Activated B cell treated with CpG ODN at 0.5 μM for 24 hours (primary cell): ENCODE measurements at regions of chr12 and their contacts with region 1.

Region 1: DNA sequence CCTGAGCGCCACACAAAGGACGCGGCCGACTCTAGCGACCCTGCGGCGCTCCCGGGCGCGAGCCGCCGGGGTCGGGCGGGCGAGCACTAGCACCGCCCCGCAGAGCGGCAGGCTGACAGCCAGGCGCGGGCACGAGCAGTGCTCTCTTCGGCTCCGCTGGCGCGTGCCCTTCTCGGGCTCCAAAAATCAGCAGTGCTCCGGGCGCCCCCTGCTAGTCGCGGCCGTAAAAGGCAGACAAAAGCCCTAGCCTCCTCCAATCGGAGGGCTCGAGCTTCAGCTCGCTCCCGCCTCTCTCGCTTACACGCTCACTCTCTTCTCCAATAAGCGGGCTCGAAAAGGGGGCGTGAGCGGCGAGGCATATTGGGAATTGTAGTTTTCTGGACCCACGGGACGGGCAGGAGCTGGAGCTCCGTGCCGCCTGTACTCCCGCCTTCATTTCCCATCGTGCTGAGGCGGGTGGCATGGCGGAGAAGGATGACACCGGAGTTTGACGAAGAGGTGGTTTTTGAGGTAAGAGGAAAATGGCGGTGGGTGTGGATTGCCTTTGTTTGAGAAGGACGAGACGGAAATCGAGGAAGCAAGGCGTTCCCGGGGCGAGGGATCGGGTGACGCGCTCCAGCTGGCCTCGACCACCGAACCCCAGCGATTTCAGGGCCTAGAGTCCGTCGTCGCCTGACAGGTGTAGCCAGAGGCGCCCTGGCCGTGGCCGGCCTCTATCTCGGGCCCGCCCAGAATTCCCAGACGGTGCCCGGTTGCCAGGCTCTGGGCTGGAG is at the starts of genes FGD6 and VEZT:
- DNase-seq: peak; percentile 92
- ATAC-seq: peak; percentile 92
- H3K4me3 Mint-ChIP-seq: peak within 1 kb of the TSS; percentile 96
- H3K27ac Mint-ChIP-seq: peak within 1 kb of the TSS; percentile 95
- H3K4me1 Mint-ChIP-seq: peaks cover 42% of the 10 kb centered on the region
- H3K27me3 Mint-ChIP-seq: no peaks in the 10 kb centered on the region
- CTCF ChIP-seq: no peak
- total RNA-seq, gene FGD6: 3.7 and 5.4 TPM in 2 replicates
- total RNA-seq, gene VEZT: 47.2 and 58.7 TPM in 2 replicates

Region 2: GRCh38 chr12:93441617-93442410 is 1775.7 kb before region 1 on chr12 and contains the start of gene UBE2N:
- CTCF ChIA-PET with region 1: no interaction called
- POLR2A ChIA-PET with region 1: no interaction called
- intact Hi-C with region 1: loop called (anchors 5 kb)
- DNase-seq: peak; percentile 99
- ATAC-seq: peak; percentile 84
- H3K4me3 Mint-ChIP-seq: peak within 1 kb of the TSS; percentile 96
- H3K27ac Mint-ChIP-seq: peak within 1 kb of the TSS; percentile 96
- H3K4me1 Mint-ChIP-seq: peaks cover 56% of the 10 kb centered on the region
- H3K27me3 Mint-ChIP-seq: no peaks in the 10 kb centered on the region
- CTCF ChIP-seq: no peak
- total RNA-seq, gene UBE2N: 152 and 163 TPM in 2 replicates

Region 3: DNA sequence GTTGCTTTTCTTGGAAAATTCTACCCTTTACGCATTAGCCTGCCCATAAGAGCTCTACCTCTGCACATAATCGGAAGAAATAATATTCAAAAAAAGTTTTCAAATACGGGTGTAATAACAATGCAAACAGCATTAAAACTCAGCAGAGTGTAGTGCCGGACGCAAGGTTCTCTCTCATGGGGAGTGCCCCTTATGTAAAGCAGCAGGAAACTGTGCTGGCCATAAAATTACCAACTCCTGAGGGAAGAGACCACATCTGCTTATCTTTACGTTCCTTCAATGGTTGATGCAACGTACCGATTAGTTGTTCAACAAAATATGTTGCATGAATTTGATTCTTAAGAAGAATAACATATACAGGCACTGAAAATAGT is 448.5 kb before region 1 on chr12:
- CTCF ChIA-PET with region 1: no interaction called
- POLR2A ChIA-PET with region 1: no interaction called
- intact Hi-C with region 1: loop called (anchors 5 kb)
- DNase-seq: peak; percentile 26
- ATAC-seq: peak; percentile 86
- H3K4me3 Mint-ChIP-seq: peak overlapping the region; percentile 86
- H3K27ac Mint-ChIP-seq: peak overlapping the region; percentile 98
- H3K4me1 Mint-ChIP-seq: peaks cover 68% of the 10 kb centered on the region
- H3K27me3 Mint-ChIP-seq: no peaks in the 10 kb centered on the region
- CTCF ChIP-seq: no peak

Region 4: DNA sequence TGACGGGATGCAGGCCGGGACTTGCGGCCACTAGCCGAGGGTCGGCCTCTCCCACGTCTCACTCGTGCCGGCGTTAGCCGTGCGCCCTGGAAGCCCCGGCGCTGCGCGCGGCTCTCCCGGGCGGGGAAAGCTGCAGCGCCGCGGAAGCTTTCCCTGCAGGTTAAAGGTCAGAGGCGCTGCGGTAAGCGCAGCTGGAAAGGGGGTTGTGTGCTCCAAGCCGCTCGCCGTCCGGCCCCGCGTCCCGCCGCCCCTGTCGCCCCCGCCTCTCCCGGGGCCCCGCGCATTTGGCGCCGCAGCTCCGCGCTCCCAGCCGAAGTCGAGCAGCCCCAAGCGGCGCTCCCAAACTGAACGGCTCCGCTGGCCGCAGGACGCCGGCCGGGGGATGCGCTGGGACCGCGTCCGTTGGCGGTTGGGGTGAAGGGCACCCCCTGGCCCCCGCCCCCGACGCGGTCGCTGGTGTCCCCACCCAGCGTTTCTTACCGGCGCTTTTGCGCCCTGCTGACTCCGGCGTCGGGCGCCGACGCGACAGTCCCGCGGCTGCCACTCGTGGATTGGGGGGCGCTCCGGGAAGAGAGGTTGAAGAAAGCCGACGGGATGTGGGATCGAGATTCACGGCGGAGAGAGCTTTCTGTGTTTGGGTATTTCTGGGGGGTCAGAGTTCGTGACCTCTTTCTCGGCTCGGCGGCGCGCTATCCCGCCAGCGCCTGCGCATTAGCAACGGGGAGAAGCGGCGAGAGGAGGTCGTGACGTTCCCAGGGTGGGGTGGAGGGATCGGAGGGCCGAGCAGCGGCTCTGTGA is 144.5 kb before region 1 on chr12 and contains the start of gene NR2C1:
- CTCF ChIA-PET with region 1: interaction called, 4 read pairs
- POLR2A ChIA-PET with region 1: interaction called, 9 read pairs
- intact Hi-C with region 1: loop called (anchors 1 kb)
- DNase-seq: peak; percentile 83
- ATAC-seq: peak; percentile 99
- H3K4me3 Mint-ChIP-seq: peak within 1 kb of the TSS; percentile 97
- H3K27ac Mint-ChIP-seq: peak within 1 kb of the TSS; percentile 94
- H3K4me1 Mint-ChIP-seq: peaks cover 13% of the 10 kb centered on the region
- H3K27me3 Mint-ChIP-seq: no peaks in the 10 kb centered on the region
- CTCF ChIP-seq: no peak
- total RNA-seq, gene NR2C1: 28.3 and 30.8 TPM in 2 replicates

Region 5: GRCh38 chr12:95198914-95199313 is 18.6 kb before region 1 on chr12:
- CTCF ChIA-PET with region 1: interaction called, 3 read pairs
- POLR2A ChIA-PET with region 1: interaction called, 14 read pairs
- intact Hi-C with region 1: loop called (anchors 1 kb)
- DNase-seq: no peak
- ATAC-seq: peak; percentile 46
- H3K4me3 Mint-ChIP-seq: peak overlapping the region; percentile 57
- H3K27ac Mint-ChIP-seq: peak overlapping the region; percentile 74
- H3K4me1 Mint-ChIP-seq: peaks cover 45% of the 10 kb centered on the region
- H3K27me3 Mint-ChIP-seq: no peaks in the 10 kb centered on the region
- CTCF ChIP-seq: no peak

Region 6: GRCh38 chr12:95548539-95549391 is 331.2 kb after region 1 on chr12:
- CTCF ChIA-PET with region 1: no interaction called
- POLR2A ChIA-PET with region 1: interaction called, 3 read pairs
- intact Hi-C with region 1: loop called (anchors 5 kb)
- DNase-seq: peak; percentile 64
- ATAC-seq: peak; percentile 86
- H3K4me3 Mint-ChIP-seq: peak overlapping the region; percentile 91
- H3K27ac Mint-ChIP-seq: peak overlapping the region; percentile 73
- H3K4me1 Mint-ChIP-seq: peaks cover 22% of the 10 kb centered on the region
- H3K27me3 Mint-ChIP-seq: no peaks in the 10 kb centered on the region
- CTCF ChIP-seq: no peak

Region 7: DNA sequence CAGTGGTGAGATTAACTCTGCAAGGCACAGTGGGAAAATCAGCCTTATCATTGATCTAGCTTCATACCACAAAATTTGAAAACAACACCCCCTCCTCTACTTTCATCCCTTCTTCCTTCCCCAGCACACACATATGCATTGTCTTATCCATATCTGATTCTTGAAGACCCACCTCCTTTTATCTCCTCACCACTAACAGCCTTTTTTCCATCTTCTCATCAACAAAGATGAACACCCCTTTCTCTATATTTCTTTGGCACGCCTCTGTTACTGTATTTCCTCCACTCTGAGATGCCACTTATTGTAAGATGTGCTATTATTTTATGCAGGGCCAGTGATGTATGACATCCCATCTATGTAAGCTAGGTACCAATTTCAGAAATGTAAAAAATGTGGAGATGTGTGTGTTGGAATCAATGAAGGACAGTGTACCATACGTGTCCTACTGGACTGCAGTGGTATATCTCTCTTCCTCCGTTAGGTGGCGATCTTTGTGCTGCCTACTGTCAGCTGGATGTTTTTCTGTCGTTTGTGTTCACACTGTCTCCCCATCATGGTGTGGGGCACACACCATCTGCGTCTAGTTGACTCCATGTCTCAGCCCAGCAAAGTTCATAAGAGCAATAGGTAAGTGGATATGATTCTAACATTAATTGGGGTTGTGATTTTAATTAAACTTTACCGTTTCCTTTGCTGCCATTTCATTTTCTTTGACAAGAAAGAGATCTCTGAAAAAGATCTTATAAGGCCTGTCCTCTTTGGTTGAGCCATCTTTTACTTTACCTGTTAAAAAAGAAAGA is 700.8 kb after region 1 on chr12:
- CTCF ChIA-PET with region 1: no interaction called
- POLR2A ChIA-PET with region 1: no interaction called
- intact Hi-C with region 1: no loop called
- DNase-seq: no peak
- ATAC-seq: peak; percentile 82
- H3K4me3 Mint-ChIP-seq: no peak overlapping the region
- H3K27ac Mint-ChIP-seq: no peak overlapping the region
- H3K4me1 Mint-ChIP-seq: no peaks in the 10 kb centered on the region
- H3K27me3 Mint-ChIP-seq: peaks cover 6% of the 10 kb centered on the region
- CTCF ChIP-seq: peak; percentile 43

Region 8: DNA sequence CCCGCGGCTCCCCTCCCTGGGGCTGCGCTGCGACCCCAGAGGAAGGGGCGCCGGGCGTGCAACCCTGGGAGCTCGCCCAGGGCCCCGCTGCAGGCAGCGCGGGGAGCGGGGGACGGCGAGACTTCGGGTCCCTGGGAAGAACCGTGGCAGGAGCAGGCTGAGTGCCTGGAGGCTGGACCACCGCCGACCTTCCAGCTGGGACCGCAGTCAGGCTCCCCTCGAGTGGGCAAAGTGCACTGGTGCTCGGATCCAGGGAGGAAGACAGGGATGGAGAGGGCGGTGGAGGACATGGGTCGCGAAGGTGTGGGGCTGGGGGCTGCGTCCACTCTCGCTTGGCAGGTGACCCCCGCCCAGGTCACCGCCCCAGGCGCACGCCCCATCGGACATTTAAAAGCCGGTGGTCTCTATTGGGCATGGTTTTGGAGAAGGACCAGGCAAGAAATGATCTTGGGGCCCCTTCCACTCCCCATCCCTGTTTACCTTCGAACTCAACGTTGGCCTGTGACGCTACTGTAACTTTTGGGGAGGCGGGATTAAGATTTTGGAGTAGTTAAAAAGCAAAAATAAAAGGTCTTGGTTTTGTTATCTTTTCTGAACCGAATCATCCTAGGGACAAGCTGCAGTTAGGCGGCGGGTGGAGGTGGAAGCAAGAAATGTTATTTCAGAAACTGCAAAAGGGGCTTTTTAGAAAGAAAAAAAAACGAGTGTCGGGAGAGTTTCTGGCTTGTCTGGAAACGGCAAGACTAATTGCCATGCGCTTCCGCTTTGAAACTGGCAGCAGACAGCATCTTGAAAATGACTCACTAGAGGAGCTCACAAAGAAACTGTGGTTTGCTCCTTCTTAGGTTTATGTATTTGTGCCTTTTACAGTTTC is 977.6 kb after region 1 on chr12:
- CTCF ChIA-PET with region 1: no interaction called
- POLR2A ChIA-PET with region 1: no interaction called
- intact Hi-C with region 1: loop called (anchors 5 kb)
- DNase-seq: peak; percentile 45
- ATAC-seq: peak; percentile 57
- H3K4me3 Mint-ChIP-seq: peak overlapping the region; percentile 99
- H3K27ac Mint-ChIP-seq: peak overlapping the region; percentile 99
- H3K4me1 Mint-ChIP-seq: peaks cover 72% of the 10 kb centered on the region
- H3K27me3 Mint-ChIP-seq: no peaks in the 10 kb centered on the region
- CTCF ChIP-seq: no peak